ENCODE measurements at regions of chr12 and their contacts with region 1.

Region 1: GRCh38 chr12:15532364-15532977 is 210.2 kb downstream of the PTPRO start:
- DNase-seq: no peak
- ATAC-seq: no peak
- H3K4me3 ChIP-seq: no peak overlapping the region
- H3K27ac ChIP-seq: no peak overlapping the region
- H3K4me1 ChIP-seq: peaks cover 7 to 11% of the 10 kb centered on the region in 2 donors
- H3K27me3 ChIP-seq: no peaks in the 10 kb centered on the region

Region 2: DNA sequence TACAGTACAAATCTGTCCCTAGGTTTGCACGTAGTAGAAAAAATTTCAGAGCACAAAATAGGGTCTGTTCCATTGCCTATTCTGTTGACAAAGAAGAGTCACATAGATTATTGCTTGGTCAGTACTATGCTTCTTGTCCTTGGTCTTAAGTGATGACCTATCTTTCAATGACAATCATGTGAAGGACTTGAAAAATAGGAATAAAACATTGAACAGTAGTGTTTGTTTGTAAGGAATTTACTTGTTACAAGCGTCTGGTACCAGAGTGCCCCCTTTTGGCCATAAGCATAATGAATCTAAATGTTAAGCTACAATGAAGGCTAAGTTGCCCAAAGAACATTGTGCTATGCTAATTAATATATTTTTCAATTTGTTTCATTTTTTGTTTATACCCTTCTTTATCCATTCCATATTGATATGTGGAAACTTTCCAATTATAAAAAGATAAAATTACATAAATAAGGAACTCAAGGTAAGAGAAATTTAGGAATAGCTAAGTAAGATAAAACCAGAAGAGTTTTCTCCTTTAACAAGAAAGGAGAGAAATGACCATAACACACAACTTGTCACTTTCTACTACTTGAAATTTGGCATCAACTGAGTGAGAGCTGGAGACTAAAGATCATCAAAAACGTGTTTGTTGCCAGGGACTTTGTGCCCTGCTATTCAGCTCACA is 52.0 kb after region 1 on chr12:
- intact Hi-C with region 1: loop called (anchors 1 to 2 kb)
- DNase-seq: no peak
- ATAC-seq: peak; percentile 55
- H3K4me3 ChIP-seq: no peak overlapping the region
- H3K27ac ChIP-seq: no peak overlapping the region
- H3K4me1 ChIP-seq: no peaks in the 10 kb centered on the region
- H3K27me3 ChIP-seq: no peaks in the 10 kb centered on the region

Region 3: DNA sequence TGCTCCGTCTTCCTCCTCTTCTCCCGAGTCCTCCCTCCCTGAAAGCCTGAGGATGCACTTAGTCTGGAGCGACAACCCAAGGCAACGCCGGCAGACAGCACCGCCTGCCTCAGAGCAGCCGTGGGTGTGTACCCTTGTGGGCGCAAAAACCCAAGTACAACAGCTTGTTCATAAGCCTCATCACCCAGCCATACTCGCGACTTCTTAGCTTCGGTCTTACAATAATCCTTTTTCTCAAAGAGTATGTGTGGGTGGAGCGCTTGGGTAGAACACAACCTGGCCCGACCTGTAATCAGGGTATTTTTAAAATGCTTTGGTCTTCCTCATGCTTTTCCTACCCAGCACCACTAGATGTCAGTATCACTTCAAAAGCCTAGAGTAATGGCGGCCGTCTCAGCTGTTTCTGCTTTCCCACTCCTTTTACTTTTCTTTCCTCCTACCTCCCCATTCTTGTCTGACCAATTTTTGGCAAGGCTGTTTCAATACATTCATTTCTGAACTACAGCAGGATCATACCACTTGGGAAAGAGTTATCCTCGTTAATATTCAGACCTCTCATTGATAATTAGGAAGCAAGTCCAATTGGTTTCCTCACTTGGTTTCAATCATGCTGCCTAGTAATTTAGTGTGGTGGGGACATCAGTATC is 57.8 kb after region 1 on chr12:
- intact Hi-C with region 1: loop called in 1 of 2 experiments (anchors 2 kb)
- DNase-seq: peak in 1 of 2 donors; percentile 49
- ATAC-seq: peak; percentile 92
- H3K4me3 ChIP-seq: no peak overlapping the region
- H3K27ac ChIP-seq: no peak overlapping the region
- H3K4me1 ChIP-seq: no peaks in the 10 kb centered on the region
- H3K27me3 ChIP-seq: no peaks in the 10 kb centered on the region

Region 4: DNA sequence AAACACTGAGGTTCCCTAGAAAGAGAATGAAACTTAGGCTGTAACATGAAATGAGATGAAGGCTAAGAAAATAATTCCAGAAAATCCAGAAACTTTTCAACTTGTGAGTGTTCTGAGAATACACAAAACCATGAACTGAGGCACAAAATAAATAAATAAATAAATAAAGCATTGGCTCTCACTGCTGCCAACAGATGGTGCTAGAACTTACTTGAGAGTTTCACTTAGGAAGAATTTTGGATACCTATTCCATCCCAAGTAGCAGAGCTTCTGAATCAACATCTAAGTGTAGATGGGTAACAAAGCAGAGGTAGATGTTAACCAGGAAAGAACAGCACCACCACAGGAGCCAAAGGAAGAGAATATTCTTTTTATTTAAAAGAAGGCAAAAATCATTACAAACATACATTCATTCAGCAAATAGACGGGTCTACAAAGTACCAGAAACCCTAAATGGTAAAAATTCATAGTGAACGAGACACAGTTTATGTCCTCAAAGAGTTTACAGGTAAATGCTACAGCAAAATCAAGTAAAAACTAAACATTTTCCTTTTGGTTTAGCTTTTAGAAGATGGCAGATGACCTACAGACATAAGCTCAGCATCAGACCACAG is 240.0 kb after region 1 on chr12:
- intact Hi-C with region 1: no loop called
- DNase-seq: no peak
- ATAC-seq: no peak
- H3K4me3 ChIP-seq: no peak overlapping the region
- H3K27ac ChIP-seq: no peak overlapping the region
- H3K4me1 ChIP-seq: peaks cover 6 to 10% of the 10 kb centered on the region in 2 donors
- H3K27me3 ChIP-seq: no peaks in the 10 kb centered on the region

Region 5: GRCh38 chr12:15892645-15893259 is 360.3 kb after region 1 on chr12:
- intact Hi-C with region 1: no loop called
- DNase-seq: no peak
- ATAC-seq: no peak
- H3K4me3 ChIP-seq: no peak overlapping the region
- H3K27ac ChIP-seq: no peak overlapping the region
- H3K4me1 ChIP-seq: no peaks in the 10 kb centered on the region
- H3K27me3 ChIP-seq: no peaks in the 10 kb centered on the region